Activated CD4-positive, alpha-beta memory T cell treated with anti-CD3 and anti-CD28 coated beads for 36 hours (primary cell): ENCODE measurements at regions of chr15 and their contacts with region 1.

Region 1: GRCh38 chr15:99104788-99105513 is at the start of gene SYNM:
- DNase-seq: peak; percentile 60
- H3K4me3 Mint-ChIP-seq: peak within 1 kb of the TSS; percentile 62
- H3K27ac Mint-ChIP-seq: no peak within 1 kb of the TSS
- H3K4me1 Mint-ChIP-seq: peaks cover 10% of the 10 kb centered on the region
- H3K27me3 Mint-ChIP-seq: peaks cover 35% of the 10 kb centered on the region
- total RNA-seq, gene SYNM: 2.6 to 2.7 TPM

Region 2: GRCh38 chr15:99213187-99213811 is 108.3 kb after region 1 on chr15:
- CTCF ChIA-PET with region 1: interaction called, 35 read pairs
- POLR2A ChIA-PET with region 1: no interaction called
- intact Hi-C with region 1: loop called (anchors 1 kb)
- DNase-seq: peak; percentile 77
- H3K4me3 Mint-ChIP-seq: no peak overlapping the region
- H3K27ac Mint-ChIP-seq: no peak overlapping the region
- H3K4me1 Mint-ChIP-seq: no peaks in the 10 kb centered on the region
- H3K27me3 Mint-ChIP-seq: peaks cover 7% of the 10 kb centered on the region